ENCODE measurements at regions of chr17 and their contacts with region 1.

Region 1: DNA sequence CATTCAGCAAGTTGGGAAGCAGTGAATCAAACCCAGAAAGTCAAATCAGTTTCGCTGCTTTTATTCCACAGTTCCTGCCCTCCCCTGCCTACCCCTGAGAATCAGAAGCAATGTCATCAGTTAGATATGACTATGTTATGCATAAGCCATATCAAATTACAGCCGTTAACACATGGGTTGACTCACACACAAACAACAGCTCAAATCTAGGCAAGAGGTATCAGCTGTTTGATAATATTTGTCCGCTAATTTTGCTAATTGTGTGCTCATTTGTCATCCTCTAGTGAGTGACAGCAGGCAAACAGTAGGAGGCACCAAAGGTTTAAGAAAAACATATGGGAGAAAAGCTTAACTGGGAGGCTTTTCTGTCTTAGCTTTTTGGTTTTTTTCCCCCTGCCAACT is 327.4 kb upstream of the CCL2 start:
- DNase-seq: no peak
- H3K4me3 ChIP-seq: no peak overlapping the region
- H3K27ac ChIP-seq: no peak overlapping the region
- H3K27me3 ChIP-seq: peaks cover 0 to 17% (median 0%) of the 10 kb centered on the region in 45 donors
- CTCF ChIP-seq: peak in 52 of 56 donors; percentile 14 to 66 (median 43)

Region 2: GRCh38 chr17:34146440-34147043 is 218.8 kb after region 1 on chr17:
- intact Hi-C with region 1: loop called in 1 of 2 experiments (anchors 2 kb)
- DNase-seq: peak in 6 of 10 donors; percentile 41 to 74 (median 52)
- H3K4me3 ChIP-seq: no peak overlapping the region
- H3K27ac ChIP-seq: no peak overlapping the region
- H3K27me3 ChIP-seq: peaks cover 0 to 11% (median 0%) of the 10 kb centered on the region in 45 donors
- CTCF ChIP-seq: peak in 54 of 56 donors; percentile 17 to 67 (median 54)

Measured in dorsolateral prefrontal cortex (tissue), 120 donors.